Activated naive CD4-positive, alpha-beta T cell treated with anti-CD3 and anti-CD28 coated beads, Interleukin-2, amount 10 ng/mL, durations not matched to agents 7 days and 5 days (primary cell): ENCODE measurements at regions of chr22 and their contacts with region 1.

Region 1: DNA sequence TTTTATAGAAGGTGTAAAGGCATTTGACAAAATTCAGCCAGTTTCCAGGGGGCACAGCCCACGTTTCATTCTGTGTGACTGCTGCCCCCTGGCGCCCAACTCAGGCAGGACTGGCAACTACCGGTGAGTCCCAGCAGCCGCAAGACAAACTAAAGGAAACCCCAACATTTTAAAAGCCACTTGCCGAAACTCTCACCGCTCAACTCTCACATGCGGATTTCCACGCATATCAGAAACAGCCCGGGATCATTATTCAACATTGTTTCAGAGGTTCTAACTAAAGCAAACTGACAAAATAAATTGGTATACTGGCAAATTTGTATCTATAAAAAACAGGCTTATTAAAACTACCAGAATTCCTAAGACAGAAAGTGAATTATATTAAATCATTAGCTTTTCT is 48.2 kb downstream of the MORC2 start:
- DNase-seq: peak; percentile 89
- H3K4me3 Mint-ChIP-seq: peak overlapping the region; percentile 33
- H3K27ac Mint-ChIP-seq: no peak overlapping the region
- H3K4me1 Mint-ChIP-seq: peaks cover 18% of the 10 kb centered on the region
- H3K27me3 Mint-ChIP-seq: no peaks in the 10 kb centered on the region

Region 2: GRCh38 chr22:30763815-30764686 is 156.4 kb before region 1 on chr22:
- CTCF ChIA-PET with region 1: interaction called, 27 read pairs
- DNase-seq: peak; percentile 74
- H3K4me3 Mint-ChIP-seq: no peak overlapping the region
- H3K27ac Mint-ChIP-seq: no peak overlapping the region
- H3K4me1 Mint-ChIP-seq: no peaks in the 10 kb centered on the region
- H3K27me3 Mint-ChIP-seq: peaks cover 7% of the 10 kb centered on the region

Region 3: GRCh38 chr22:30908051-30908461 is 12.4 kb before region 1 on chr22:
- CTCF ChIA-PET with region 1: interaction called, 10 read pairs
- DNase-seq: no peak
- H3K4me3 Mint-ChIP-seq: no peak overlapping the region
- H3K27ac Mint-ChIP-seq: no peak overlapping the region
- H3K4me1 Mint-ChIP-seq: peaks cover 1% of the 10 kb centered on the region
- H3K27me3 Mint-ChIP-seq: no peaks in the 10 kb centered on the region

Region 4: DNA sequence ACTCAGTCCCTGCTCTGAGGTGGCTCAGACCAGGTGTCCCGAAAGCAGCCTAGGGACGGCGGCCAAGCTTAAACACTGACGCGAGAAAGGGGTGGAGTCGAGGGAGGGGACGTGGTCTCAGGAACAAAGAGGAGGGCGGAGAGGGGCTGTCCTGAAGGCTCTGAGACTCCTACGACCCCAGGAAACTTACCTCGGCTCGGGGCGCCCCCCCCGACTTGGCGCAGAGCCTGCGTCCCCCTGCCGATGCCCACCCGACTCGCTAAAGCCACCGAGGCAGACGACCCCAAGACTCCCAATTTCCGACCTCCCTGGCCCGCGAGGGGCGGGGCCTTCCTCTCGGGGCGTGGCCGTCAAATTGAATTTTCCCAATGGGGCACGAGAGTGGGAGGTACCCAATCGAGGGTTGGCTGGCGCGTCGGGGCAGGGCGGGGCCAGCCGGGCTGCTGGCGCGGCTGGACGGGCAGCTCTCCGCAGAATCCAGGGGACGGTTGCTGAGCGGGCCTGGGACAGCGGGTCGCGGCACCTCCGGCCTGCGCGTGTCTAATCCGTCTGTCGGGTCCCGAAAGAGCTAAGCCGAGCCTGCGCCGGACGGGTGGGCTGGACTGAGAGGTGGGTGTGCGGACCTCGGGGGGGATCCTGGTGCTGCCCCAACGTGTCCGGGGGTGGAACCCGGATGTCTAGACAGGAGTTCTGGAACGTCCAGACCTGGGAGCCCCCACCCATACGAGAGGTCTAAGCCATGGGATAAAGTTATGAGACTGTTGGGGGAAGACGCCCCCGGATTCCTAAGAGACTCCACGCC is 160.6 kb after region 1 on chr22 and contains the start of gene SMTN:
- CTCF ChIA-PET with region 1: interaction called, 13 read pairs
- DNase-seq: peak; percentile 94
- H3K4me3 Mint-ChIP-seq: peak within 1 kb of the TSS; percentile 89
- H3K27ac Mint-ChIP-seq: peak within 1 kb of the TSS; percentile 74
- H3K4me1 Mint-ChIP-seq: peaks cover 44% of the 10 kb centered on the region
- H3K27me3 Mint-ChIP-seq: peaks cover 18% of the 10 kb centered on the region